ENCODE measurements at regions of chr9 and their contacts with region 1.

Region 1: DNA sequence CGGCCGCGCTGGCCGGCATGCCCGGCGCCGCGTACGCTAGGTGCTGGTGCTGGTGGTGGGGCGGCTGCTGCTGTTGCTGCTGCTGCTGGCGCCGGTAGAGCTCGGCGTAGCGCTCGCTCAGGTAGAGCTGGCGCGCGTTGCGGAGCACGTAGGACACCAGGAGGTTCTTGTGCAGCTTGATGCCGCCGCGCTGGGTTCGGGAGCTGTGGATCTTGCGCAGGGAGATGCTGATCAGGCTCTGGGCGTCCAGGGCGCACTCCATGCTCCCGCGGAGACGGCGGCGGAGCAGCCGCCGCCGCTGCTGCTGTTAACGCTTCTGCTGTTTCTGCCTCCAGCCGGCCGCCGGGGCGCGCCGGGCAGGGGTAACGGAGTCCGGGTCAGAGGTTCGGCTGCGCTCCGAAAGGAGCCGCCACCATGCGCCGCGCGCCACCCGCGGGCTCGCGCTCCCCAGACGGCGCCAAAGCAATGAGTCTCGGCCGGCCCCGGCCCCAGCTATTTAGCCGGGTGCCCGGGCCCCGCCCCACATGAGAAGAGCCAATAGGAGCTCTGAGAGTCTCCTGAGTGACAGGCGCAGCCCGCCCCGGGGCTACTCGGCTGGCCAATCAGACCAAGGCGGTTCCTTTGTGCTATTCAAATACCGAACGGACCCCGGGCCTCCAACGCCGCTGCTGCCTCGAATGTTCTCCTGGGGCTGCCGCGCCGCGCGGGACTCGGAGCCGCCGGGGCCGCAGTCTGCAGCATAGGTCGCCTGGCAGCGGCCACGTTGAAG is at the start of gene IER5L:
- DNase-seq: peak; percentile 96 to 98
- H3K4me3 ChIP-seq: peak within 1 kb of the TSS; percentile 99 to 100
- H3K27ac ChIP-seq: peak within 1 kb of the TSS; percentile 99 to 100
- H3K4me1 ChIP-seq: peaks cover 4 to 27% (median 21%) of the 10 kb centered on the region in 4 donors
- H3K27me3 ChIP-seq: no peaks in the 10 kb centered on the region
- CTCF ChIP-seq: no peak

Region 2: GRCh38 chr9:129139993-129140396 is 38.0 kb before region 1 on chr9:
- intact Hi-C with region 1: loop called (anchors 2 kb)
- DNase-seq: peak; percentile 98 to 99
- H3K4me3 ChIP-seq: peak overlapping the region; percentile 45 to 57
- H3K27ac ChIP-seq: peak overlapping the region; percentile 91 to 99
- H3K4me1 ChIP-seq: peaks cover 18 to 79% (median 74%) of the 10 kb centered on the region in 4 donors
- H3K27me3 ChIP-seq: no peaks in the 10 kb centered on the region
- CTCF ChIP-seq: no peak

Region 3: DNA sequence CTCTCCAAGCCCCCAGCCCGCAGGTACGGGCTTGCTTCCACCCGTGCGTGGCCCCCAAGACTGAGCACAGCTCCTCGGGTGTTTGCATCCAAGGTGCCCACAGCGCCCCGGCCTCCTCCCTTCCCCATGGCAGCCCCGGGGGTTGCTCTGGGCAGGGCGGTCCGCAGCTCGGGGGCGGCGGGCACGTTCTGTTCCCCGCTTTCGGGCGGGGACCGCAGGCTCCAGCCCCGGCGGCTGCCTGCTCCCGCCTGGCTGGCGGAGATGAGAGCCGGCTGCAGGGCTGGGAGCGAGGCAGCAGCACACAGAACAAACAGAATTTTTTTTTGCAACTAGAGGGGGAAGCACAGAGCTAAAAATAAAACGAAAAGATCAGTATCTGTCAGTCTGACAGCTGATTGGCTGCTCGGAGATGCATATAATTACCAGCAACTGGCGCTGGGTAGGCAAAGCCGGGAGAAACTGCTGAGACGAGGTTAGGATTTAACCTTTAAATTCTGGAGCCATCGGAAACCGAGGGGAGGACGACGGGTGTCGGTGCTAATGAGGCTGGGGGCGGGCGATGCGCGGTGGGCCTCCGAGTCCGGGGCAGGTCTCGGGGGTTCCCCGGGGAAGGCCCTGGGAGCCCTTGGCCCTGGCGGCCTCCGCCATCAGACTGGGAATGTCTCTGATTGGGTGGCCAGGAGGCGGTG is 142.7 kb after region 1 on chr9:
- intact Hi-C with region 1: loop called (anchors 5 kb)
- DNase-seq: peak; percentile 82 to 88
- H3K4me3 ChIP-seq: peak overlapping the region; percentile 49 to 56
- H3K27ac ChIP-seq: peak overlapping the region; percentile 90 to 93
- H3K4me1 ChIP-seq: peaks cover 13 to 90% (median 82%) of the 10 kb centered on the region in 4 donors
- H3K27me3 ChIP-seq: no peaks in the 10 kb centered on the region
- CTCF ChIP-seq: no peak

Region 4: GRCh38 chr9:129413537-129414376 is 235.8 kb after region 1 on chr9:
- intact Hi-C with region 1: loop called (anchors 5 kb)
- DNase-seq: peak; percentile 99 to 100
- H3K4me3 ChIP-seq: peak overlapping the region; percentile 56 to 61
- H3K27ac ChIP-seq: peak overlapping the region; percentile 97 to 100
- H3K4me1 ChIP-seq: peaks cover 0 to 34% (median 27%) of the 10 kb centered on the region in 4 donors
- H3K27me3 ChIP-seq: no peaks in the 10 kb centered on the region
- CTCF ChIP-seq: no peak

Region 5: DNA sequence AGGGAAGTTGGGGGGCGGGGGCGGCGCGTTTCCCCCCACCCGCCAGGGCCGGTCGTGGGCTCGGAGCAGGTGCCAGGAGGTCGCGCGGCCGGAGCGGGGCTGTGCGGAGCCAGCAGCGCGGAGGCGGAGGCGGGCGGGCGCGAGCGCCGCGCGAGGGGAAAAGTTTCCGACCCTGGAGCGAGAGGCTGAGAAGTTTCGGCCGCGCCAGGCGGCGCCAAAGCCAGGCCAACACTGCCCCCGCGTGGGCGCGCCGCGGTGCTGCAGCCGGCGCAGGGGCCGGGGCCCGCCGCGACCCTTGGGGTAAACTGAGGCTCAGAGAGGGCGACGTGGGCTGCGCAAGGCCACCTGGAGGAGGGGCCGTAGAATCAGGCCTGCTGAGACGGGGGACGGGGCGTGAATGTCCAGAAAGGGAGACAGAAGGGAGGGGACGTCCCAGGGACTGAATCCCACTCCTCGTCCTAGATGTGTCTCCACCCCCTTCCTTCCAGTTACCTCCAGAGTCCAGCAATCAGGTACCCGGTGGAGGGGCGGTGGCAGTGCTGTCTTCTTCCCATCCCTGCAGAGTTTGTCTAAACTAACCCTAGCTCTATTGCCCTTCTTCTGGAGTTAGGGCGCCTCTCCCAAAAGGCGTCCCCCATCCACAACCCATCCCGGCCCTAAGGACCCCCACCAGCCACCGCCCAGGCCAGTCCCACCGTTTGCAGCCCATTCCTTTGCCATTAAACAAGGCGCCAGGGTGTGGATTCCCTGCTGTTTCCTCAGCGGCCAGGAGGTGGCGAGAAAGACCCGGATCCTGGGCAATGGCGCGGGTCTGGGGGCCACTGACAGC is 432.7 kb after region 1 on chr9:
- intact Hi-C with region 1: loop called (anchors 2 kb)
- DNase-seq: peak; percentile 73 to 87
- H3K4me3 ChIP-seq: peak overlapping the region; percentile 66 to 89
- H3K27ac ChIP-seq: peak overlapping the region; percentile 94 to 95
- H3K4me1 ChIP-seq: peaks cover 0 to 52% (median 44%) of the 10 kb centered on the region in 4 donors
- H3K27me3 ChIP-seq: no peaks in the 10 kb centered on the region
- CTCF ChIP-seq: peak; percentile 87 to 100

Region 6: GRCh38 chr9:129752915-129753729 is 575.1 kb after region 1 on chr9 and contains the start of gene PTGES:
- intact Hi-C with region 1: no loop called
- DNase-seq: peak; percentile 67 to 79
- H3K4me3 ChIP-seq: peak within 1 kb of the TSS; percentile 30 to 33
- H3K27ac ChIP-seq: peak within 1 kb of the TSS in 1 of 2 donors; percentile 6
- H3K4me1 ChIP-seq: peaks cover 0 to 17% (median 14%) of the 10 kb centered on the region in 4 donors
- H3K27me3 ChIP-seq: peaks cover 0 to 20% of the 10 kb centered on the region in 2 donors
- CTCF ChIP-seq: no peak